Activated CD4-positive, alpha-beta T cell treated with anti-CD3 and anti-CD28 coated beads for 36 hours (primary cell): ENCODE measurements at regions of chr14 and their contacts with region 1.

Region 1: DNA sequence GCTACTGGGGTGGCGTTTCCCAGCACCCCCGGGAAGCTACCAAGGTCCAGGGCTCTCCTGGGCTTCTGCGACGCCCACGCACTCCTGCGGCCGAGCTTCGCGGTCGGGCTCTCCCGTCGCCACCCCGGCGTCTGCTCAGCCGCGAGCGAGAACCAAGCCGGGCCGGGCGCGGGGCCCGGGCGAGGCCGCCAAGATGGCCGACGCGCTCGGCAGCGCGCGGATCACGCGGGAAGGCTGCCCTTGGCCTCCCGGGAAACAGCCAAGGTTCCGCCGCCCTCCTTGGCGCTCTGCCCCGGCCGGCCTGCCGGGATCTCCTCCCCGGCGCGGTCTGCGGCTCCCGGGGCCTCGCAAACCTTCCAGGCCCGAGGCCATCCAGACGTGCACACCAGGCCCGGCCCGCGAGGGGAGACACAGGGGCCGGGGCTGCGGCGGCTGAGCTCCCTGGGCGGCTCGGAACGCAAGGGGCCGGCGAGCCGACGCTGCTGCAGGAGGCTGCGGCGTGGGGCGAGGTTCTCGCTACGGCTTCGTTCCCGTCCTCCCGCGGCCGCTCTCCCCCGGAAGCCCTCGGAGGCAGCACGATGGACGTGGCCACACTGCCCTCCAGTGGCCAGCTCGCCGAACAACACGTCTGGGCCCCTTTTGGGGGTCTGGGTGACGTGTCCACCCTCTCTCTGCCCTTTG is 23.5 kb upstream of the ZFP36L1 start:
- DNase-seq: peak; percentile 93
- ATAC-seq: peak; percentile 72
- H3K4me3 Mint-ChIP-seq: peak overlapping the region; percentile 74
- H3K27ac Mint-ChIP-seq: peak overlapping the region; percentile 94
- H3K4me1 Mint-ChIP-seq: peaks cover 69% of the 10 kb centered on the region
- H3K27me3 Mint-ChIP-seq: no peaks in the 10 kb centered on the region

Region 2: DNA sequence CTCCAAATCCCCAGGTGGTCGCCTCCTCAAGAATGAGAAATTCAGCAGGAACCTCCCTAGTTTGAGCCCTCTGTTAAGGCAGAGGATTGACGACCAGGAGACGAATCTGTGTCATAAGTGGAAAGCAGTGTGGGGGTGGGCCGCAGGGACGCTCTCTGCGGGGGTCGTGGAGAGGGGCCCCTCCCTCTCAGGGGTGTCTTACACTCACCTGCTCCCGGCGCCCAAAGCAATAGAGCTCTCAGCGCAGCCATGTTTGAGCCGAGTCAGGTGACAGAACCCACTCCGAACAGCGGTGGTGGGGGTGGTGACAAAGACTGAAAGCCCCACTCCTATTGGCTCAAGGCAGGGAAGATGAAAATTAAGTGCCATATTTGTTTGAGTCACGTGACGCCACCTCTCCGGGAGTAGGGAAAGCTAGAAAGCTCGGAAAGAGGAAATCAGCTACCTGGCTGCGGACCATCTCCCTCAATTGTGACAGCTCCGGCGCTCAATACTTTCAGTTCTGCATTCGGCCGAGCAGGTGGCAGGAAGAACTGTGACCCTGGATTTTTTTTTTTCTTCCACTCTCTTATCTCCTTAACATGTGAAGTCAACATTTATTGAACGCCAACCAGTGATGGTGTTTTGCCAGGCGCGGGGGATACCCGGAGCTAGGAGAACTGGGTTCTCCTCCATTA is 999.9 kb before region 1 on chr14 and contains the start of gene ZFYVE26:
- CTCF ChIA-PET with region 1: interaction called, 3 read pairs
- POLR2A ChIA-PET with region 1: no interaction called
- intact Hi-C with region 1: loop called in 1 of 2 experiments (anchors 5 kb)
- DNase-seq: peak; percentile 95
- ATAC-seq: peak; percentile 89
- H3K4me3 Mint-ChIP-seq: peak within 1 kb of the TSS; percentile 89
- H3K27ac Mint-ChIP-seq: peak within 1 kb of the TSS; percentile 92
- H3K4me1 Mint-ChIP-seq: peaks cover 45% of the 10 kb centered on the region
- H3K27me3 Mint-ChIP-seq: no peaks in the 10 kb centered on the region
- total RNA-seq, gene ZFYVE26: 13.0 to 14.2 TPM

Region 3: DNA sequence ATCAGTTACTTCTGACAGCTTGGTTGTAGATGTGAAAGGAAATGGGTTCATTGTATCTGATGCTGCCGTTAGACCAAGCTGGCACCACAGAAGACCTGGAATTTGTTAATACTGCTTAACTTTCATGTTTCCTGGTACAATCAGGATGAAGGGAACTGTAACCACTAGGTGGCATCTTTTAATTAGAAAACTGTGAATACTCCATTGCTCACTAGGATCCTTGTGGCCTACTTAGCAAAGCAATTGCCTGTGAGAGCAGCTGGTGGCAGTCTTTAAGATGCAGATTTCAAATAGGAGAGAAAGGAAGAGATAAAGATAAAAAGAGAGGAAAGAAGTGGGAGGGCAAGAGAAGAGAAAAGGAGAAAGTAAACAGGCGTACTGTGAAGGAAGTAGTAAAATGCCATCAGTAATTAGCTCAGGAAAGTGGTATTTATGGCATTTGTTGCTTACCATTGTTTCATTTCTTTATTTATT is 882.4 kb before region 1 on chr14:
- CTCF ChIA-PET with region 1: interaction called, 9 read pairs
- POLR2A ChIA-PET with region 1: no interaction called
- intact Hi-C with region 1: loop called in 1 of 2 experiments (anchors 2 kb)
- DNase-seq: peak; percentile 11
- ATAC-seq: peak; percentile 65
- H3K4me3 Mint-ChIP-seq: no peak overlapping the region
- H3K27ac Mint-ChIP-seq: peak overlapping the region; percentile 44
- H3K4me1 Mint-ChIP-seq: peaks cover 5% of the 10 kb centered on the region
- H3K27me3 Mint-ChIP-seq: no peaks in the 10 kb centered on the region

Region 4: GRCh38 chr14:68248481-68249255 is 567.7 kb before region 1 on chr14:
- CTCF ChIA-PET with region 1: interaction called, 52 read pairs
- POLR2A ChIA-PET with region 1: interaction called, 8 read pairs
- intact Hi-C with region 1: loop called (anchors 1 kb)
- DNase-seq: peak; percentile 14
- ATAC-seq: peak; percentile 65
- H3K4me3 Mint-ChIP-seq: no peak overlapping the region
- H3K27ac Mint-ChIP-seq: no peak overlapping the region
- H3K4me1 Mint-ChIP-seq: peaks cover 42% of the 10 kb centered on the region
- H3K27me3 Mint-ChIP-seq: no peaks in the 10 kb centered on the region

Region 5: GRCh38 chr14:68685419-68686204 is 130.8 kb before region 1 on chr14:
- CTCF ChIA-PET with region 1: interaction called, 3 read pairs
- POLR2A ChIA-PET with region 1: interaction called, 9 read pairs
- intact Hi-C with region 1: loop called in 1 of 2 experiments (anchors 1 kb)
- DNase-seq: peak; percentile 86
- ATAC-seq: peak; percentile 87
- H3K4me3 Mint-ChIP-seq: peak overlapping the region; percentile 31
- H3K27ac Mint-ChIP-seq: peak overlapping the region; percentile 81
- H3K4me1 Mint-ChIP-seq: peaks cover 57% of the 10 kb centered on the region
- H3K27me3 Mint-ChIP-seq: no peaks in the 10 kb centered on the region

Region 6: GRCh38 chr14:68780358-68781160 is 35.8 kb before region 1 on chr14:
- CTCF ChIA-PET with region 1: interaction called, 19 read pairs
- POLR2A ChIA-PET with region 1: interaction called, 5 read pairs
- intact Hi-C with region 1: loop called in 1 of 2 experiments (anchors 5 kb)
- DNase-seq: peak; percentile 53
- ATAC-seq: peak; percentile 14
- H3K4me3 Mint-ChIP-seq: peak overlapping the region; percentile 61
- H3K27ac Mint-ChIP-seq: peak overlapping the region; percentile 92
- H3K4me1 Mint-ChIP-seq: peaks cover 80% of the 10 kb centered on the region
- H3K27me3 Mint-ChIP-seq: no peaks in the 10 kb centered on the region

Region 7: DNA sequence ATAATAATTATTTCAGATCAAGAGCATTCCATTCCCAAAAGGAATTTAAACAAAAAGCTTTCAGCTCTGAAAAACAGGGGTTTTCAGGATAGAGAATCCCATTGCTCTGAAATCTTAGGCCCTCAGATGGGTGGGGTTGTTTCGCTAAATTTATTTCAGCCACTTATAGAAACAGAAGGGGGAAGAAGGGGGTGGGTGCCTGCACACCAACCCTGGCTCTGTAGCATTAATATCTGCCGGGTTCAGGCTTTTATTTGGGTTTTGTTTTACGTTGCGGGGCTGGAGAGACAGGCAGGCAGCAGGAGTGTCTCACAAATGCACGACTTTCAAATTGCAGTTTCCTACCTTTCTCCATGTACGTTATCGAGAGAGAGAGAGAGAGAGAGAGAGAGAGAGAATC is 11.0 kb before region 1 on chr14:
- CTCF ChIA-PET with region 1: interaction called, 19 read pairs
- POLR2A ChIA-PET with region 1: no interaction called
- intact Hi-C with region 1: no loop called
- DNase-seq: no peak
- ATAC-seq: no peak
- H3K4me3 Mint-ChIP-seq: no peak overlapping the region
- H3K27ac Mint-ChIP-seq: no peak overlapping the region
- H3K4me1 Mint-ChIP-seq: peaks cover 32% of the 10 kb centered on the region
- H3K27me3 Mint-ChIP-seq: no peaks in the 10 kb centered on the region